ENCODE measurements at regions of chr2 and their contacts with region 1.

Region 1: GRCh38 chr2:170815746-170816503 is 762 bp upstream of the GAD1 start:
- DNase-seq: peak; percentile 42 to 66
- H3K4me3 ChIP-seq: peak overlapping the region; percentile 65
- H3K27ac ChIP-seq: no peak overlapping the region
- H3K4me1 ChIP-seq: no peaks in the 10 kb centered on the region
- H3K27me3 ChIP-seq: no peaks in the 10 kb centered on the region
- CTCF ChIP-seq: peak; percentile 82

Region 2: GRCh38 chr2:170235860-170236679 is 579.9 kb before region 1 on chr2:
- CTCF ChIA-PET with region 1: no interaction called
- POLR2A ChIA-PET with region 1: no interaction called
- intact Hi-C with region 1: loop called (anchors 5 kb)
- DNase-seq: peak; percentile 22 to 45
- H3K4me3 ChIP-seq: no peak overlapping the region
- H3K27ac ChIP-seq: no peak overlapping the region
- H3K4me1 ChIP-seq: no peaks in the 10 kb centered on the region
- H3K27me3 ChIP-seq: no peaks in the 10 kb centered on the region
- CTCF ChIP-seq: peak; percentile 78

Region 3: GRCh38 chr2:170361090-170361936 is 454.6 kb before region 1 on chr2:
- CTCF ChIA-PET with region 1: no interaction called
- POLR2A ChIA-PET with region 1: no interaction called
- intact Hi-C with region 1: loop called (anchors 2 kb)
- DNase-seq: peak in 1 of 2 experiments; percentile 50
- H3K4me3 ChIP-seq: no peak overlapping the region
- H3K27ac ChIP-seq: no peak overlapping the region
- H3K4me1 ChIP-seq: no peaks in the 10 kb centered on the region
- H3K27me3 ChIP-seq: no peaks in the 10 kb centered on the region
- CTCF ChIP-seq: peak; percentile 80

Region 4: GRCh38 chr2:170396799-170397459 is 419.0 kb before region 1 on chr2:
- CTCF ChIA-PET with region 1: no interaction called
- POLR2A ChIA-PET with region 1: no interaction called
- intact Hi-C with region 1: loop called (anchors 1 kb)
- DNase-seq: no peak
- H3K4me3 ChIP-seq: no peak overlapping the region
- H3K27ac ChIP-seq: no peak overlapping the region
- H3K4me1 ChIP-seq: no peaks in the 10 kb centered on the region
- H3K27me3 ChIP-seq: no peaks in the 10 kb centered on the region
- CTCF ChIP-seq: peak; percentile 62

Region 5: GRCh38 chr2:170587922-170588321 is 228.0 kb before region 1 on chr2:
- CTCF ChIA-PET with region 1: no interaction called
- POLR2A ChIA-PET with region 1: no interaction called
- intact Hi-C with region 1: loop called (anchors 10 kb)
- DNase-seq: peak; percentile 30 to 57
- H3K4me3 ChIP-seq: no peak overlapping the region
- H3K27ac ChIP-seq: no peak overlapping the region
- H3K4me1 ChIP-seq: peaks cover 10% of the 10 kb centered on the region
- H3K27me3 ChIP-seq: no peaks in the 10 kb centered on the region
- CTCF ChIP-seq: no peak

Region 6: GRCh38 chr2:170862286-170862902 is 46.5 kb after region 1 on chr2:
- CTCF ChIA-PET with region 1: no interaction called
- POLR2A ChIA-PET with region 1: no interaction called
- intact Hi-C with region 1: no loop called
- DNase-seq: no peak
- H3K4me3 ChIP-seq: no peak overlapping the region
- H3K27ac ChIP-seq: no peak overlapping the region
- H3K4me1 ChIP-seq: no peaks in the 10 kb centered on the region
- H3K27me3 ChIP-seq: no peaks in the 10 kb centered on the region
- CTCF ChIP-seq: no peak

Region 7: GRCh38 chr2:170873035-170873692 is 57.2 kb after region 1 on chr2:
- CTCF ChIA-PET with region 1: interaction called, 4 read pairs
- POLR2A ChIA-PET with region 1: no interaction called
- intact Hi-C with region 1: loop called (anchors 1 kb)
- DNase-seq: peak; percentile 52 to 77
- H3K4me3 ChIP-seq: peak overlapping the region; percentile 18; the same call in 1 of the 2 replicates
- H3K27ac ChIP-seq: no peak overlapping the region
- H3K4me1 ChIP-seq: no peaks in the 10 kb centered on the region
- H3K27me3 ChIP-seq: peaks cover 3% of the 10 kb centered on the region
- CTCF ChIP-seq: peak; percentile 93

Region 8: GRCh38 chr2:171008550-171009205 is 192.8 kb after region 1 on chr2:
- CTCF ChIA-PET with region 1: no interaction called
- POLR2A ChIA-PET with region 1: no interaction called
- intact Hi-C with region 1: no loop called
- DNase-seq: no peak
- H3K4me3 ChIP-seq: no peak overlapping the region
- H3K27ac ChIP-seq: no peak overlapping the region
- H3K4me1 ChIP-seq: no peaks in the 10 kb centered on the region
- H3K27me3 ChIP-seq: no peaks in the 10 kb centered on the region
- CTCF ChIP-seq: no peak

Measured in PC-9 (cell line).